H1 (cell line): ENCODE measurements at regions of chr11 and their contacts with region 1.

Region 1: GRCh38 chr11:134050541-134051383 is 18.1 kb upstream of the JAM3 start:
- DNase-seq: peak in 1 of 2 experiments; percentile 85
- H3K4me3 ChIP-seq: peak overlapping the region in 1 of 4 experiments; percentile 26; a peak in 3 of 8 replicates
- H3K27ac ChIP-seq: no peak overlapping the region
- H3K4me1 ChIP-seq: peaks cover 1 to 14% (median 7%) of the 10 kb centered on the region in 4 experiments; a peak in 6 of 7 replicates
- H3K27me3 ChIP-seq: no peaks in the 10 kb centered on the region; a peak in 2 of 7 replicates
- CTCF ChIP-seq: peak; percentile 83 to 95 (median 92)
- EP300 ChIP-seq: no peak
- POLR2A ChIP-seq: no peak
- RAD21 ChIP-seq: peak; percentile 85 to 90

Region 2: DNA sequence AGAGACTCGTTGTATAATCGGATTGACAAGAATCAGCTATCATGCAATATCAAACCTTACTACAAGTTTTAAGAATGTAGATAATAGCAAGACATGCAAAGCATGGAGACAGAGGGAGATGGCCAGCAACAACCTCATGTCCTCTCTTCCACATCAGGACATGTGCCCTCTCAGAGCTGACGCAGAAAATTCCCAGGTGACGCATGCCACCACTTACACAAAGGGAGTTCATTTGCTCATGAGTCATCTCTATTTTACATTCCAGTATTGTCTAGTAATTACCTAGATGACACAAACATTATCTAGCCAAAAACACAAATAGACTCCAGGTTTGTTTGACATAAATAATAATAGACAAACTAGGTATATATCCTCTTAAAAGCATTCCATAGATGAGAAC is 480.4 kb before region 1 on chr11:
- CTCF ChIA-PET with region 1: no interaction called
- POLR2A ChIA-PET with region 1: no interaction called
- DNase-seq: no peak
- H3K4me3 ChIP-seq: no peak overlapping the region
- H3K27ac ChIP-seq: no peak overlapping the region
- H3K4me1 ChIP-seq: no peaks in the 10 kb centered on the region
- H3K27me3 ChIP-seq: no peaks in the 10 kb centered on the region; a peak in 1 of 7 replicates
- CTCF ChIP-seq: no peak
- EP300 ChIP-seq: no peak
- POLR2A ChIP-seq: no peak
- RAD21 ChIP-seq: no peak

Region 3: DNA sequence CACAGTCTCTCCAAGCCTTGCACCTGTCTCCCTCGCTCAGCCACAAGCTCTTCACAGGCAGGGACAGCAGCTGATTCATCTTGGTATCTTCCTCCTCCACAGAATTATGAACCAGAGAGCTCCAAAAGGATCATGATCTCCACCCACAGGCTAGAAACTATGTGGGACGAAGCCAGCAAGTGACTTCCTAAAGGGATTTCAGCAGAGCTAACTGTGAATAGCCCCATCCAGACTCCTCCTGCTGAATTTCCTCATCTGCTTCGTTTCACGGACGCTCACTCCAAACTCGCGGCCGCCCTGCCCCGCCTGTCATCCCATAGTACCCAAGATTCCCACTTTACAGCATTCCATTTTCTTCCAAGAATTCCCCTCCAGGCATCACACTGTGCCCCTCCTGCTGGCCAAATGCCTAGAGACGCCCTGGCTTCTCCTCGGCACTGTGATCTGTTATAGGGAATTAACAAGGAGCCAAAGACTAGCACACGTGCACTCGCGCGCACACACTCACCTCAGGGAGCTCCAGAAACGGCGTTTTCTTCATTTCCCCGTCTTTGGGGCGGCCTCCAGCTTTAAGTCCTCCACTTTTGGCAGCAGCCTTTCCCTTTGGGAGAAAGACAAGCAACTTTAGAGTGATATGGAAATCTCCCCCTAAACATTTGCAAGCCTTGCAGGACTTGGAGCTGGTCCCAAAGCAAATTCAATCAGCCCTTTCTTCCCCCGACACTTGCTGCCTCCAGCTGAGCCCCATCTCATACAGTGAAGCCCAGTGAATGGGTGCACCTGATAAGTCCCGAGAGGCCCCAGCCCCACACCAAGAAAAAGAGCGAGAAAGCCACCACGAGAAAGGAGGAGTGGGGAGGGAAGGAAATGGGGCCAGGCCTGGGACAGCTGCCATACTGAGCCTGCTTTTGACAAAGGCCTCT is 240.9 kb before region 1 on chr11:
- CTCF ChIA-PET with region 1: no interaction called
- POLR2A ChIA-PET with region 1: no interaction called
- DNase-seq: no peak
- H3K4me3 ChIP-seq: no peak overlapping the region
- H3K27ac ChIP-seq: no peak overlapping the region
- H3K4me1 ChIP-seq: peaks cover 2 to 14% (median 12%) of the 10 kb centered on the region in 4 experiments; a peak in 6 of 7 replicates
- H3K27me3 ChIP-seq: no peaks in the 10 kb centered on the region; a peak in 1 of 7 replicates
- CTCF ChIP-seq: peak in 1 of 3 experiments; percentile 14; a peak in 1 of 4 replicates
- EP300 ChIP-seq: no peak
- POLR2A ChIP-seq: no peak
- RAD21 ChIP-seq: 0 out of 4 replicates have a peak, but pooled peaks of 1 of the 2 experiments have one; percentile 14

Region 4: DNA sequence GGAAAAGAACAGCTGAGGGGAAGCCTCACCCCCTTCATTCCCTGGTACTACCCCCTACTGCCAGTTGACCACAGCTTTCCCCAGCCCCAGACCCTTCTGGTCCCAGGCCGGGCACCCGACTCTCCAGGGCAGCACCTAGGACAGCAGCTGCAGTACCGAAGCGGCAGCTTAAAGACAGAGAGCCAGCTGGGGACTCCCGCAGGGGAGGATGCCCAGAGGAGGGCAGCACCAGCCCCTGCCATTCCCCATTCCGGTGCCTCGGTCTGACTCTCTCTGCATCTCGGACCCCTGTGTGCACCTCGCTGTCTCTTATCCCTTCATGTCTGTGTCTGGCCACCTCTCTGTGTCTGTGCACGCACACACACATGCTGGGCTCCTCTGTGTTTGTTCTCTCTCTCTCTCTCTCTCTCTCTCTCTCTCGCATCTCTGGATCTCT is 103.4 kb before region 1 on chr11:
- CTCF ChIA-PET with region 1: interaction called, 13 read pairs
- POLR2A ChIA-PET with region 1: interaction called, 3 read pairs
- DNase-seq: peak in 1 of 2 experiments; percentile 87
- H3K4me3 ChIP-seq: no peak overlapping the region; a peak in 2 of 8 replicates
- H3K27ac ChIP-seq: no peak overlapping the region
- H3K4me1 ChIP-seq: peaks cover 16 to 63% (median 54%) of the 10 kb centered on the region in 4 experiments
- H3K27me3 ChIP-seq: no peaks in the 10 kb centered on the region
- CTCF ChIP-seq: peak in 2 of 3 experiments; percentile 45 to 54; a peak in 3 of 4 replicates
- EP300 ChIP-seq: no peak
- POLR2A ChIP-seq: no peak
- RAD21 ChIP-seq: peak; percentile 55 to 60; a peak in 3 of 4 replicates

Region 5: DNA sequence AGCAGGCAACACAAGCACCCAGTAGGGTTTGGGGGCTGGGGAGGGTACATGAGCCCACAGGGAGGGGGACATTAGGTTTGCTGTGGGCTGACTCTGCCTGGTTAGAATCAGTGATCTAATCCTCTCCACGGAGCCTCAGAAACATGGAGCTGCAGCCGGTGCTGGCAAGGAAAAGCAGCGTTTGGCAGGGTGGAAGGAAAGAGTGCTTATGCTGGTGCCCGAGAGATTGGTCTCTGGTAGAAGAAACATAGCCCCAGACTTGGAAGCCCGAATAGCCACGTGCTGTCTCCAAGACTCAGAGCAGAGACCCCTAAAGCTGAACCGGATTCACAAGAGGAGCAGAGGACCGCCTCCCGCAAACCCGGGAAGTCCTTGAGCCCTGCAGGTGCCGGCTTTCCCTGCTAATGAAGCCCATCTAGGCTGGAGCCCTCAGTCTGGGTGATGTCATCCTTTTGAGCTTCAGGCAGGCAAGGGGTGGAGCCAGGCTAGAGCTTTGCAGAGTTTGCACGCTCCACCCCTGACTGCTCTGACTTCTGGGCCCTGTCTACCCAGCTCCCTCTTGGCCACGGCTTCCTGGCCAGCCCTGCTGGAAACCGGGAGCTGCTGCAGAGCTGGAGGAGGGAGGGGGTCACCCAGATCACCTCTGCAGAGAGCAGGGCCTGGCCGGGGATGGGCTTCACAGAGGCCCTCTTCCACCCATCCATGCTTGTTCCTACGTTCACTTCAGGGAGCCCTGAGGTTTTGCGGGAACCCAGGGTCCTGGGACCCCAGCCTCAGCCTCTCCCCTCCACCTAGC is 16.9 kb before region 1 on chr11:
- CTCF ChIA-PET with region 1: interaction called, 178 read pairs
- POLR2A ChIA-PET with region 1: interaction called, 9 read pairs
- DNase-seq: peak; percentile 77 to 78
- H3K4me3 ChIP-seq: peak overlapping the region in 1 of 4 experiments; percentile 23; a peak in 1 of 8 replicates
- H3K27ac ChIP-seq: no peak overlapping the region
- H3K4me1 ChIP-seq: peaks cover 3 to 27% (median 23%) of the 10 kb centered on the region in 4 experiments
- H3K27me3 ChIP-seq: peaks cover 0 to 5% (median 3%) of the 10 kb centered on the region in 4 experiments; a peak in 3 of 7 replicates
- CTCF ChIP-seq: no peak
- EP300 ChIP-seq: no peak
- POLR2A ChIP-seq: peak in 1 of 2 experiments; percentile 64; a peak in 2 of 3 replicates
- RAD21 ChIP-seq: no peak

Region 6: GRCh38 chr11:134074346-134074745 is 23.6 kb after region 1 on chr11:
- CTCF ChIA-PET with region 1: interaction called, 19 read pairs
- POLR2A ChIA-PET with region 1: interaction called, 4 read pairs
- DNase-seq: no peak
- H3K4me3 ChIP-seq: no peak overlapping the region
- H3K27ac ChIP-seq: no peak overlapping the region
- H3K4me1 ChIP-seq: peaks cover 0 to 9% (median under 1%) of the 10 kb centered on the region in 4 experiments; a peak in 2 of 7 replicates
- H3K27me3 ChIP-seq: peaks cover 0 to 2% (median 0%) of the 10 kb centered on the region in 4 experiments; a peak in 3 of 7 replicates
- CTCF ChIP-seq: no peak
- EP300 ChIP-seq: no peak
- POLR2A ChIP-seq: no peak
- RAD21 ChIP-seq: no peak

Region 7: DNA sequence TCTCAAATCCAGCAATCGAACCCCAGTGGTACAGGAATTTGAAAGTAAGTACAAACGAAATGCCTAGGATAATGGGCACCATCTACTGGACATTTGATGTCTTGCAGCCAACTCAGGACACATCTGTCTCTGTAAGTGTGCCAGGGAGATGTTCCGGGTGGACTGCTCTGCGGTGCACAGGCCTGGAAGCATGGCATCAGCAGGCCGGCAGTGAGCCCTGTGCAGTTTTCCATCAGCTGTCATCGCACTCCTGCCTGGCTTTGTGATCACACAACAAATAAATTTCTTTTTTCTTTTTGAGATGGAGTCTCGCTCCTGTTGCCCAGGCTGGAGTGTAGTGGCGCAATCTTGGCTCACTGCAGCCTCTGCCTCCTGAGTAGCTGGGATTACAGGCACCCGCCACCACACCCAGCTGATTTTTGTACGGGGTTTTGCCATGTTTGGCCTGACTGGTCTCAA is 89.1 kb after region 1 on chr11:
- CTCF ChIA-PET with region 1: interaction called, 41 read pairs
- POLR2A ChIA-PET with region 1: interaction called, 3 read pairs
- DNase-seq: peak; percentile 41 to 75
- H3K4me3 ChIP-seq: no peak overlapping the region
- H3K27ac ChIP-seq: no peak overlapping the region
- H3K4me1 ChIP-seq: no peaks in the 10 kb centered on the region
- H3K27me3 ChIP-seq: no peaks in the 10 kb centered on the region
- CTCF ChIP-seq: peak; percentile 50 to 93 (median 76)
- EP300 ChIP-seq: no peak
- POLR2A ChIP-seq: no peak
- RAD21 ChIP-seq: peak; percentile 90 to 93